Brain microvascular endothelial cell (primary cell): ENCODE measurements at regions of chr10 and their contacts with region 1.

Region 1: GRCh38 chr10:62082729-62083411 is 181.4 kb downstream of the ARID5B start:
- DNase-seq: peak; percentile 49
- H3K4me3 ChIP-seq: no peak overlapping the region
- H3K27ac ChIP-seq: peak overlapping the region; percentile 96
- H3K27me3 ChIP-seq: no peaks in the 10 kb centered on the region
- CTCF ChIP-seq: no peak

Region 2: GRCh38 chr10:61688551-61689308 is 394.1 kb before region 1 on chr10:
- in situ Hi-C with region 1: no loop called
- DNase-seq: no peak
- H3K4me3 ChIP-seq: no peak overlapping the region
- H3K27ac ChIP-seq: no peak overlapping the region
- H3K27me3 ChIP-seq: no peaks in the 10 kb centered on the region
- CTCF ChIP-seq: no peak

Region 3: GRCh38 chr10:62244780-62245467 is 162.1 kb after region 1 on chr10:
- in situ Hi-C with region 1: loop called (anchors 25 kb)
- DNase-seq: peak; percentile 77
- H3K4me3 ChIP-seq: no peak overlapping the region
- H3K27ac ChIP-seq: peak overlapping the region; percentile 4
- H3K27me3 ChIP-seq: no peaks in the 10 kb centered on the region
- CTCF ChIP-seq: peak; percentile 81